Thyroid gland (tissue), 4 donors: ENCODE measurements at regions of chr1 and their contacts with region 1.

Region 1: DNA sequence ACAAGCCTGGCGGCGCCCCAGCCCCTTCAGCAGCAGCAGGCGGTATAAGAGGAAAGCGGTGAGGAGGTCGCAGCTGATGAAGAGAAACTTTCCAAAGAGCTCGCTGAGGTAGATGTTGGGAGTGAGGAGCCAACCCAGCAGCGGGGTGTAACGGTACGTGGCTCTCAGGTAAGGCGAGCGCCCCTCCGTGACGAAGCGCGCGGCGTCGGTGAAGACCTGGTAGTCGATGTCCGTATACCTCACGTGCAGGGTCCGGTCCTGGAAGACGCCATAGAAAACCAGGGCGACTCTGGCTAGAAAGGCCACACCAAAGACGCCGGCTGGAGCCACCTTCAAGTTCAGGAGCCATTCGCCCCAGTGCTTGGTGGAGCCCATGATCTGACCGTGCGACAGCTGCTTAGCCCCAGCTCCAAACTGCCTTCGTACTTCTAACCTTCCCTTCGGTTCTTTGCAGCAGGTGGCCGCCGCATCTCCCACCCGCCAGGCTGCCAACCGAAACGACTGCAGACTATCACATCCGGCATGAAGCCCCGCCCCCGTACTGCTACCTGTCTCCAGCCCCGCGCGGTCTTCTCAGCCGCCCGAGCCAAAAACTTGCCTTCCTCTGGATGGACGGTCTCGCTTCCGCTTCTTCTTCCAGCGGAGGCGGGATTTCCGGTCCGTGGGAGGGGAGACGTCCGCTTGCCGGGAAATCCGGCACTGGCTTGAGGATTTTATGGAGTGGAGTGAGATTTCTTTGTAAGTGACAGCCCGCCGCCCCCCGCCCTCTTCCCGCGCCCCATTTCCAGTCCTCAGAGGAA is at the start of gene PIGM:
- DNase-seq: peak; percentile 99
- H3K4me3 ChIP-seq: peak within 1 kb of the TSS; percentile 38 to 74 (median 58)
- H3K27ac ChIP-seq: peak within 1 kb of the TSS; percentile 11 to 62 (median 41)
- H3K4me1 ChIP-seq: peaks cover 8 to 22% of the 10 kb centered on the region in 2 donors
- H3K27me3 ChIP-seq: no peaks in the 10 kb centered on the region
- CTCF ChIP-seq: peak in 1 of 6 experiments; percentile 16
- POLR2A ChIP-seq: peak in 1 of 2 donors; percentile 80
- total RNA-seq, gene PIGM: 6.7 to 10.0 (median 7.4) TPM

Region 2: DNA sequence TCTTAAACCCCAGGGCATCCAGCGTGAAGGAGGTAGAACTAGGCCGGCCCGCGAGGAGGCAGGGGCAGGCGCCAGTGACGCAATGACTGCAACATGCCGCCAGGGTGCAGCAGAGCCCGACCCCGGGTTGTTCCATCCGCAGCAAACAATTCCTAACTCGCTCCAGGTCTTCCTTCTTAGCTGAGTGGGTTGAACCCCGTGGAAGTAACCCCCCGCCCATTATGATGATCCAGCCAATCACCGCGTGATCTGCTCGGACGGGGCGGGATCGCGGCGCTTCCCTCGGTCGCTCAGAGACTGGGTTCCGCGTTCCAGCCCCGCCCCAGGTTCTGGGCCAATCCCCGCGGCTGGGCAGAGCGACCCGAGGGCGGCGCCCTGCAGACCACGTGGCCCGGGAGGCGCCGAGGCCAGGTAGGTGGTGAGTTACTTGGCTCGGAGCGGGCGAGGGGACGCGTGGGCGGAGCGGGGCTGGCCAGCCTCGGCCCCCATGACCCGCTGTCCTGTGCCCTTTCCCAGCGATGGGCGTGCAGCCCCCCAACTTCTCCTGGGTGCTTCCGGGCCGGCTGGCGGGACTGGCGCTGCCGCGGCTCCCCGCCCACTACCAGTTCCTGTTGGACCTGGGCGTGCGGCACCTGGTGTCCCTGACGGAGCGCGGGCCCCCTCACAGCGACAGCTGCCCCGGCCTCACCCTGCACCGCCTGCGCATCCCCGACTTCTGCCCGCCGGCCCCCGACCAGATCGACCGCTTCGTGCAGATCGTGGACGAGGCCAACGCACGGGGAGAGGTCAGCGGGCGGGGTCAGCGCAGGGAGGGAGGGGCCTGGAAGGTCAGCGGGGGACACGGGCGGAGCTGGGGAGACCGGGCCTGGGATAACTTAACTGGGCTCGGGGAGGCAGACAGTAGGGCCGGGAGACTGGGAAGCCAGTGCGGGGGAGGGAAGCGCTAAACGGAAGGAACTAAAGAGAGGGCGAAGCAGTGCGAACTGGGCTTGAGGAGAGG is 250.7 kb before region 1 on chr1 and contains the start of gene DUSP23:
- intact Hi-C with region 1: loop called (anchors 5 kb)
- DNase-seq: peak; percentile 98
- H3K4me3 ChIP-seq: peak within 1 kb of the TSS; percentile 80 to 93 (median 90)
- H3K27ac ChIP-seq: peak within 1 kb of the TSS; percentile 36 to 83 (median 64)
- H3K4me1 ChIP-seq: peaks cover 4 to 8% of the 10 kb centered on the region in 2 donors
- H3K27me3 ChIP-seq: no peaks in the 10 kb centered on the region
- CTCF ChIP-seq: peak; percentile 78 to 99 (median 96)
- POLR2A ChIP-seq: peak; percentile 48 to 87
- total RNA-seq, gene DUSP23: 97.3 to 183 (median 99.9) TPM

Region 3: DNA sequence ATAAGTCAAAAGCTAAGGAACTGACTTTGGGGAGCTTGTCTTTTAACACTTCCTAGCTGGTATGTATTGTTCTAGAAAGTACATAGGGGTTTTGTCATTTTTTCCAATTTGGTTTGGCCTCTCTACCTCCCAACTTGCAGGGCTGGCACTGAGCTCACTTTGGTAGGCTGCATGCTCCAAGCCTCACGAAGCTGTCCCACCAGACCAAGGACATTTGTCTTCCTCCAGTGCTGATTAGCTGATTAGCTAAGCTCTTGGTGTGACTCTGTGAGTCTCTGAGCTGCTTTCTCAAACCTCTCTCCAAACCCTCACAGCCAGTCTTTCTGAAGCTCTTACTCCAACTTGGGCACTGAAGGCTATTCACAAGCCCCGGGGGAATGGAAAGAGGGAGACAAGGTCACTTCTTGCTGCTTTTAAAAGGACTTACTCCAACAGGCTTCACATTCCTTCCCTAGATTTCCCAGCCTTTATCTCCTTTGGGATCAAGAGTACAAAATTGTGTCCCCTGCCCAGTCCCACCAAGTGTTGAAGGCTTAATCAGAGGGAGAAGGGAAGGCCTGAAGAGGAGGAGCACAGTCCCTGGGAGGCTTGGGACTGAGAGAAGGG is 130.7 kb before region 1 on chr1:
- intact Hi-C with region 1: no loop called
- DNase-seq: no peak
- H3K4me3 ChIP-seq: no peak overlapping the region
- H3K27ac ChIP-seq: peak overlapping the region in 2 of 3 donors; percentile 60 to 71
- H3K4me1 ChIP-seq: peaks cover 22 to 29% of the 10 kb centered on the region in 2 donors
- H3K27me3 ChIP-seq: no peaks in the 10 kb centered on the region
- CTCF ChIP-seq: no peak
- POLR2A ChIP-seq: no peak